ENCODE measurements at regions of chr1 and their contacts with region 1.

Region 1: GRCh38 chr1:28505406-28506187 is at the start of gene RCC1:
- DNase-seq: peak; percentile 98
- H3K4me3 ChIP-seq: peak within 1 kb of the TSS; percentile 79 to 100 (median 99)
- H3K27ac ChIP-seq: peak within 1 kb of the TSS; percentile 96
- H3K4me1 ChIP-seq: peaks cover 21% of the 10 kb centered on the region
- H3K27me3 ChIP-seq: no peaks in the 10 kb centered on the region
- CTCF ChIP-seq: no peak
- total RNA-seq, gene RCC1: 21.2 to 46.0 TPM

Region 2: GRCh38 chr1:28417429-28417922 is 88.1 kb before region 1 on chr1:
- CTCF ChIA-PET with region 1: no interaction called
- dilution Hi-C with region 1: no loop called
- in situ Hi-C with region 1: no loop called
- intact Hi-C with region 1: loop called (anchors 2 kb)
- DNase-seq: peak; percentile 95
- H3K4me3 ChIP-seq: peak overlapping the region in 1 of 3 experiments; percentile 15
- H3K27ac ChIP-seq: peak overlapping the region; percentile 100
- H3K4me1 ChIP-seq: peaks cover 20% of the 10 kb centered on the region
- H3K27me3 ChIP-seq: no peaks in the 10 kb centered on the region
- CTCF ChIP-seq: no peak

Measured in mammary epithelial cell (primary cell).